HAP-1 (cell line): ENCODE measurements at regions of chr1 and their contacts with region 1.

Region 1: DNA sequence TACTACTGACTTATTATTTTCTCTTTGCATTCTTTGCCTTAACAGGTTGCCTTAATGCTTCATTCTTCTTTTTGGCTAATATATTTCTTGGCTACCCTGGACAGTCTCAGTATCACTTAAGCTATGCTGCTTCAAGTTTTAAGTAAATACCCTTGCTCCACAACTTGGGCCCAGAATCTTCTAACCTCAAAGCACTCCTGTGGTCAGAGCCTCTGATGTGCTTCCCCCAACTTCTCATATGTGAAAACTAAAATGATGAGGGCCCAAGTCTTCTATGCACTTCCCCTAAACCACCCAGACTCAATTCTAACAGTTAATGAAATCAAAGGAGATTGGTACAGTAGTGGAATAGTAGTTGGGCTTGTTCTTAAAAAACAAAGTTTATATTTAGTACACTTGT is 314.1 kb downstream of the PLPP3 start:
- DNase-seq: no peak
- H3K4me3 ChIP-seq: no peak overlapping the region
- H3K4me1 ChIP-seq: no peaks in the 10 kb centered on the region
- H3K27me3 ChIP-seq: peaks cover 7% of the 10 kb centered on the region; the same call in 1 of the 2 replicates

Region 2: GRCh38 chr1:56329956-56330355 is 64.7 kb after region 1 on chr1:
- in situ Hi-C with region 1: loop called (anchors 10 kb)
- DNase-seq: no peak
- H3K4me3 ChIP-seq: no peak overlapping the region
- H3K4me1 ChIP-seq: no peaks in the 10 kb centered on the region
- H3K27me3 ChIP-seq: no peaks in the 10 kb centered on the region